HepG2 (cell line): ENCODE measurements at regions of chr6 and their contacts with region 1.

Region 1: GRCh38 chr6:167742719-167743303 is 83.9 kb upstream of the AFDN start:
- DNase-seq: peak; percentile 97
- ATAC-seq: peak; percentile 100
- H3K4me3 ChIP-seq: no peak overlapping the region
- H3K27ac ChIP-seq: peak overlapping the region; percentile 52
- H3K4me1 ChIP-seq: peaks cover 35% of the 10 kb centered on the region
- H3K27me3 ChIP-seq: no peaks in the 10 kb centered on the region
- CTCF ChIP-seq: peak; percentile 83
- EP300 ChIP-seq: peak in 1 of 2 experiments; percentile 74; a peak in 2 of 4 replicates
- POLR2A ChIP-seq: no peak
- RAD21 ChIP-seq: peak; percentile 80

Region 2: DNA sequence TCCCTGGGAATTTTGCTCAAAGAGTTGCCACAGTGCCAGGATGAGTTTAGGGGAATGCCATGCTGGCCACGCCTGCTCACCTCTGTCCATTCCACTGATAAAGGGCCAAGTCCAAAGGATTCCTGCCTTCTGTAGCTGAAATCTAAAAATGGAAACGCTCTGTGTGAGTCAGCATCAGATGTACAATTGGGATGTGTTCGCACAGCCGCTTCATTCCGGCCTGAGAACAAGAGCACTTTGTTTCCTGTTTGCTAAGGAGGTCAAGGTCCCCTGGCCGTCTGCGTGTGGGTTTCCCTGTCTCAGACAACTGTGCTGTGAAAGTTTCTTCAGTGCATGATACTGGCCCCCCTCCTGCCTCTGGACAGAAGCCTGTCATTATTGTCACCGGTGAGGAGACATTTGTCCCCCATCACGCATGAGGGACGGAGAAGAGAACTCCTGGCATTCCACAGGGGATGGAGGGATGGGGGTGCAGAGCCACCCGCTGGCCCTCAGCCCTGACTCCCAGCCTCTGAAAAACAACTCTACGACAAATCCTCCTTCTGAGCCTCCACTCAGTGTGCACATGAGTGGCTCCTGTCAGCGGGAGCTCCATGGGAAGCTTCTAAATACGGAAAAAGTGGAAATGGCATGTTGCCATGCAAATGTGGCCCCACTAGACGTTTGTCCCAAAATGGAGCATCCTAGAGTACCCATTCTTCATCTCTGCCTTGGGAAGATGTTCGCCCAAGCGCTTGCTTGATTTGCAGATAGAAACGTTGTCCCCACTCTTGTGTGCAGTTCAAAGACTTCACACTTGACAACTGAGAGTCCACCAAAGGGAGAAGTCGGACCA is 59.6 kb before region 1 on chr6:
- CTCF ChIA-PET with region 1: no interaction called
- POLR2A ChIA-PET with region 1: interaction called, 14 read pairs
- in situ Hi-C with region 1: no loop called
- intact Hi-C with region 1: no loop called
- DNase-seq: peak; percentile 100
- ATAC-seq: peak; percentile 93
- H3K4me3 ChIP-seq: peak overlapping the region in 1 of 3 experiments; percentile 35; a peak in 2 of 6 replicates
- H3K27ac ChIP-seq: peak overlapping the region; percentile 96
- H3K4me1 ChIP-seq: peaks cover 77% of the 10 kb centered on the region
- H3K27me3 ChIP-seq: no peaks in the 10 kb centered on the region
- CTCF ChIP-seq: peak; percentile 33
- EP300 ChIP-seq: peak; percentile 99
- POLR2A ChIP-seq: peak in 1 of 2 experiments; percentile 42; a peak in 2 of 4 replicates
- RAD21 ChIP-seq: peak; percentile 70; the same call in 1 of the 2 replicates